ENCODE measurements at regions of chr14 and their contacts with region 1.

Region 1: GRCh38 chr14:21269252-21270046 is at the start of gene HNRNPC:
- DNase-seq: peak; percentile 100
- H3K4me3 Mint-ChIP-seq: peak within 1 kb of the TSS; percentile 100
- H3K27ac Mint-ChIP-seq: peak within 1 kb of the TSS; percentile 100
- H3K4me1 Mint-ChIP-seq: peaks cover 25% of the 10 kb centered on the region
- H3K27me3 Mint-ChIP-seq: no peaks in the 10 kb centered on the region
- total RNA-seq, gene HNRNPC: 1,252 to 1,377 TPM

Region 2: GRCh38 chr14:21103710-21104447 is 165.6 kb before region 1 on chr14:
- CTCF ChIA-PET with region 1: interaction called, 3 read pairs
- intact Hi-C with region 1: loop called (anchors 1 kb)
- DNase-seq: peak; percentile 98
- H3K4me3 Mint-ChIP-seq: peak overlapping the region; percentile 87
- H3K27ac Mint-ChIP-seq: peak overlapping the region; percentile 84
- H3K4me1 Mint-ChIP-seq: peaks cover 29% of the 10 kb centered on the region
- H3K27me3 Mint-ChIP-seq: no peaks in the 10 kb centered on the region

Region 3: DNA sequence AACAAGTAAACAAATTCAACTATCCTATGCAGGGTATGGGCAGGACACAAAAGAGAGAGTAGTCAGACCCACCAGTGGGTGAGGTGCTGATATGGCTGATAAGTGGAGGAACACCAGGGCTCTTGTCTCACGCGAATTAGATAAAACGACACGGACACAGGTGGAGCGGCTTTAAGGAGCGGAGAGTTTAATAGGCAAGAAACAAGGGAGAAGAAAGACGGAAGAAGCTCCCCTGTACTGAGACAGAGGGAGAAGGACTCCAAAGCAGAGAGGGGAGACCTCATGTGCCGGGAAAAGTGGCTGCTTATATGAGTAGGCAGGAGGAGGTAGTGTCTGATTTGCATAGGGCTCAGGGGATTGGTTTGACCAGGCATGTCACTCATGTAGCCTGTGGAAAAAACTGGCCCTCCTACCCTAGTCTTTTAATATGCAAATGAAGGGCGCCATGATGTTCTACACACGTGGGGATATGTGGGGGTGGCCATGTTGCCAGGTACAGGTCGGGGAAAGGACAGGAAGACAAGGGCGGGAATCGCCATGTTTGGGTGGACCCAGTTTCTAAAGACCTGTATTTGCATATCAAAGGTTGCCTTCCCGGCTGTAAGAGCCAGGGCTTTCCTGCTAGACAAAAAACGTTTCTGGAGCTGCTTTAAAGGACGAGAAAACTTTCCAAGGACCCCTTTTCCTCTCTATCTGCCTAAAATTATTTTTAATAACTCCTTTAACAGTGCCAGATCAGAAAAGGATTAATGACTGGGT is 39.2 kb after region 1 on chr14:
- CTCF ChIA-PET with region 1: interaction called, 3 read pairs
- intact Hi-C with region 1: loop called (anchors 1 kb)
- DNase-seq: peak; percentile 94
- H3K4me3 Mint-ChIP-seq: peak overlapping the region; percentile 66
- H3K27ac Mint-ChIP-seq: peak overlapping the region; percentile 87
- H3K4me1 Mint-ChIP-seq: peaks cover 23% of the 10 kb centered on the region
- H3K27me3 Mint-ChIP-seq: no peaks in the 10 kb centered on the region

Region 4: DNA sequence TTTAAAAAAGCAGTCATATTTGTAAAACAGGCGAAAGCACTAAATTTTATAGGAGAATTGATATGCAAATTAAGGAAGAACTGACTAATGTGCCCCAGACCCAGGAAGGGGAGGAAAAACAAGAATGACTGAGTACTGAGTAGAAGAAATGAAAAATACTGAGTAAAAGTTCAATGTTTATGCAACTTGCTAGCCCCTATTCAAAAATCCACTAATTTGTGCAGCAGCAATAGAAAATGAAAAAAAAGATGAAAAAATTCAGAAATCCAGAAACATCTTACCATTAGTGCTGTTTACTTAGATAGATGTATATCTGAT is 180.4 kb after region 1 on chr14:
- CTCF ChIA-PET with region 1: no interaction called
- intact Hi-C with region 1: loop called (anchors 1 kb)
- DNase-seq: no peak
- H3K4me3 Mint-ChIP-seq: no peak overlapping the region
- H3K27ac Mint-ChIP-seq: peak overlapping the region; percentile 85
- H3K4me1 Mint-ChIP-seq: peaks cover 72% of the 10 kb centered on the region
- H3K27me3 Mint-ChIP-seq: no peaks in the 10 kb centered on the region

Region 5: GRCh38 chr14:21510735-21511657 is 241.5 kb after region 1 on chr14 and contains the start of gene METTL3:
- CTCF ChIA-PET with region 1: no interaction called
- intact Hi-C with region 1: loop called (anchors 1 kb)
- DNase-seq: peak; percentile 96
- H3K4me3 Mint-ChIP-seq: peak within 1 kb of the TSS; percentile 96
- H3K27ac Mint-ChIP-seq: peak within 1 kb of the TSS; percentile 96
- H3K4me1 Mint-ChIP-seq: peaks cover 30% of the 10 kb centered on the region
- H3K27me3 Mint-ChIP-seq: no peaks in the 10 kb centered on the region
- total RNA-seq, gene METTL3: 60.6 TPM

Region 6: GRCh38 chr14:22589096-22589839 is 1319.8 kb after region 1 on chr14 and contains the start of gene DAD1:
- CTCF ChIA-PET with region 1: no interaction called
- intact Hi-C with region 1: loop called (anchors 1 kb)
- DNase-seq: peak; percentile 100
- H3K4me3 Mint-ChIP-seq: peak within 1 kb of the TSS; percentile 98
- H3K27ac Mint-ChIP-seq: peak within 1 kb of the TSS; percentile 99
- H3K4me1 Mint-ChIP-seq: peaks cover 68% of the 10 kb centered on the region
- H3K27me3 Mint-ChIP-seq: no peaks in the 10 kb centered on the region
- total RNA-seq, gene DAD1: 219 to 226 TPM